ENCODE measurements at regions of chr14 and their contacts with region 1.

Region 1: GRCh38 chr14:79011091-79011919 is 841.1 kb downstream of the NRXN3 start:
- DNase-seq: peak; percentile 15
- H3K4me3 ChIP-seq: no peak overlapping the region
- H3K27ac ChIP-seq: peak overlapping the region; percentile 25
- H3K27me3 ChIP-seq: no peaks in the 10 kb centered on the region
- CTCF ChIP-seq: peak; percentile 42

Region 2: DNA sequence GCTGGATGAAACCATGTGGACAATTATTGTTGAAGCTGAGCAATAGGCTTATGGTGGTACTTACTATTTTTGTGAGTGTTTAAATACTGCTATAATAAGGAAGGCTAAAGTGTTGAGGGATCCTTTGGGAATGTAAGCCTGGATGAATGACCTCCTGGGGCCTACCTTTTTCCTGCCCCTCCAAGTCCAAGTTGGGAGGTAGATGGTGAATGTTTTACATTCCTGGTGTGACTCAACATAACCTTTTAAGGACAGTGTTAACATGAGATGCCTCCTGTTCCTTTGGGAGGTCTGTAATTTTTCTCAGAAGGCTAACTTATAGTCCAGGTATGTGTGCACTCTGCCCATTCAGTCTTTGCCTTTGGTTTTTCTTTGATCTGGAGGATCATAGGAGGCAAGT is 525.2 kb before region 1 on chr14:
- CTCF ChIA-PET with region 1: no interaction called
- POLR2A ChIA-PET with region 1: no interaction called
- DNase-seq: no peak
- H3K4me3 ChIP-seq: no peak overlapping the region
- H3K27ac ChIP-seq: no peak overlapping the region
- H3K27me3 ChIP-seq: no peaks in the 10 kb centered on the region
- CTCF ChIP-seq: no peak

Region 3: GRCh38 chr14:78959674-78960264 is 51.5 kb before region 1 on chr14:
- CTCF ChIA-PET with region 1: interaction called, 12 read pairs
- POLR2A ChIA-PET with region 1: no interaction called
- DNase-seq: peak; percentile 51
- H3K4me3 ChIP-seq: no peak overlapping the region
- H3K27ac ChIP-seq: no peak overlapping the region
- H3K27me3 ChIP-seq: no peaks in the 10 kb centered on the region
- CTCF ChIP-seq: peak; percentile 93

Region 4: DNA sequence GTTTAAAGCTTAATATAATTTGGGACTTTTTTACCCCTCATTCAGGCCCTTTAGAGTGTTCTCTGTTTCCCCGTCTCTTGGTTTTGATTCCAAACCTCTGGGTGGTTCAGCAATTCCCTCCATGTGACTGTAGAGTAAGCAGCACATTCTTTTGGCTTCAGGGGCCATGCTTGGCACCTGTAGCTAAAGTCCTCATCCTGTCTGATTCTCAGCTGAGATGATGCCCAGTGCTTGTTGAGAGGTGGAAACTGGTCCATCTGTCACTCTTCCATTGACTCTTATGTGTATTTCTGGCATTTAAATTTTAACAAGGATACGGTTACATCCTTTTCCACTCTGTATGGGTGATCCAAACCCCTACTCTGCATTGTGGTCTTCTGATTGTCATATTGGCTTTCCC is 1072.9 kb after region 1 on chr14:
- CTCF ChIA-PET with region 1: no interaction called
- POLR2A ChIA-PET with region 1: interaction called, 10 read pairs
- DNase-seq: no peak
- H3K4me3 ChIP-seq: no peak overlapping the region
- H3K27ac ChIP-seq: no peak overlapping the region
- H3K27me3 ChIP-seq: no peaks in the 10 kb centered on the region
- CTCF ChIP-seq: no peak